Vagina (tissue), 2 donors: ENCODE measurements at regions of chr16 and their contacts with region 1.

Region 1: GRCh38 chr16:88442727-88443576 is 10.1 kb upstream of the ZFPM1 start:
- DNase-seq: no peak
- H3K4me3 ChIP-seq: no peak overlapping the region
- H3K27ac ChIP-seq: no peak overlapping the region
- H3K4me1 ChIP-seq: peaks cover 6% of the 10 kb centered on the region
- H3K27me3 ChIP-seq: no peaks in the 10 kb centered on the region
- CTCF ChIP-seq: peak; percentile 93 to 98 (median 97)
- POLR2A ChIP-seq: no peak

Region 2: GRCh38 chr16:88527186-88527936 is 84.4 kb after region 1 on chr16:
- intact Hi-C with region 1: loop called (anchors 2 kb)
- DNase-seq: no peak
- H3K4me3 ChIP-seq: no peak overlapping the region
- H3K27ac ChIP-seq: no peak overlapping the region
- H3K4me1 ChIP-seq: peaks cover 40% of the 10 kb centered on the region
- H3K27me3 ChIP-seq: no peaks in the 10 kb centered on the region
- CTCF ChIP-seq: peak; percentile 49 to 88 (median 85)
- POLR2A ChIP-seq: no peak